AG04450 (cell line): ENCODE measurements at regions of chr2 and their contacts with region 1.

Region 1: DNA sequence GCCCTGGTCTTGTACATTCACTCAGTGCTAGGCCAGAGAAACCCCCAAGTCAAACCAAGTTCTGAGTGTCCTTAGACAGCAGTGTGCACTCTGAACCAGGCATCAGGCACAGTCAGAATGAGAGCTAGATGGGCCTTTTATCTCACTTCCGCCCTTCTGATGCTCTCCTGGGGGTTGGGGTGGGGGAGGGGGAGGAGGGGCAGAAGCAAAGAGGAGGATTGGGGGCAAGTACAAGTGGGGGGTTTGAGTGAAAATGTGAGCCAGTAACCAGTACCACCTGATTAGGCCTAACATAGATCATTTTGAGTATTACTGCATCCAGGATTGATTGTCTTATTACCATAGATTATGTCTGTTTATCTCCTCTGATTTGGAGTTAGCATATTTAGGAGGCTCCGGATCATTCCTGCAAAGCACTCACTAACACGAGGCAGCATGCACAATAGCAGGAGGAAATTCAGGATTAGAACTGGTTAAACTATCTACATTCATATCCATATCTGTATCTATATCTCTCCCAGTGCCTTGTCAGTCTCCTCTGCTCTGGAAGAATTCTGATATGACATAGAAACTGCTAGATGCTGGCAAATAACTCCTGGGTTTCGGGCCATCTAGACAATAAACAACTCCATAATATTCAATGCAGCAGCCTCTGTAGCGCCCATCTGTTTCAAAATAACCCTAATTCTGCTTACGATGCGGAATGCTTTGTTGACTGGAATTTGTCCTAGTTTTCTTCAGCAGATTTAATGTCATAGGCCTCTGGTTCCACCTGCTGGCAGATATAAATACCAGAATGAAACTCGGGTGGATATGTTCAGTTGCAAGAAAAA is 149.1 kb downstream of the RHBDD1 start:
- DNase-seq: peak; percentile 66
- H3K4me3 ChIP-seq: no peak overlapping the region
- H3K27ac ChIP-seq: no peak overlapping the region
- H3K27me3 ChIP-seq: no peaks in the 10 kb centered on the region
- CTCF ChIP-seq: peak; percentile 74

Region 2: DNA sequence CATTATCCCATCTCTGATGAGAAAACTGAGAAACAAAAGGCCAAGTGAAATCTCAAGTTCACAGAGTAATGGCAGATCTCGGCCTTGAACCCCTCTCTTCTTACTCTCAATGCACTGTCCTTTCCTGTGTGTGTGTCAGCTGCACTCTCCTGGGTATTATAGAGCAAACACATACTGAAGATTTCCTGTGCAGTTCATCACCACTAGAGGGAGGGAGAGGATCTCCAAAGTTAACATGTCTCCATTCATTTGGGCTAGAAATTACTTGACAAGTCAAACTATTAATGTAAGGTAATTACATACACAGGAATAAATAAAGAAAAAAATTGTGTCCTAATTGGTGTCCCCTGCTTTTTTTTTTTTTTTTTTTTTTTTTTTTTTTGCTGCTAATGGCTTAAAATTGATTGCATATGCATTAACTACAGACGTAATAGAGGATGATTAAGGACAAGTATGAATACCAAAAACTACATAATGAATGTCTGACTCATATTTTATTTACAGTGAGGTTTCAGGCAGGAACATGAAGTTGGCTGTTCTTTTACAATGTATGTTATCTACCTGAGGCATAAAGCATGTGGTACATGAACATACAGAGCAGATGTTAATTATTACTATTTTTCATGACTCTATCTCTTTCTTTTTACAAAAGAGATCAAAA is 1316.2 kb before region 1 on chr2:
- CTCF ChIA-PET with region 1: interaction called, 22 read pairs
- POLR2A ChIA-PET with region 1: no interaction called
- DNase-seq: peak; percentile 56
- H3K4me3 ChIP-seq: no peak overlapping the region
- H3K27ac ChIP-seq: no peak overlapping the region
- H3K27me3 ChIP-seq: no peaks in the 10 kb centered on the region
- CTCF ChIP-seq: peak; percentile 90

Region 3: GRCh38 chr2:226869371-226869770 is 115.6 kb before region 1 on chr2:
- CTCF ChIA-PET with region 1: no interaction called
- POLR2A ChIA-PET with region 1: no interaction called
- DNase-seq: no peak
- H3K4me3 ChIP-seq: no peak overlapping the region
- H3K27ac ChIP-seq: no peak overlapping the region
- H3K27me3 ChIP-seq: no peaks in the 10 kb centered on the region
- CTCF ChIP-seq: no peak

Region 4: DNA sequence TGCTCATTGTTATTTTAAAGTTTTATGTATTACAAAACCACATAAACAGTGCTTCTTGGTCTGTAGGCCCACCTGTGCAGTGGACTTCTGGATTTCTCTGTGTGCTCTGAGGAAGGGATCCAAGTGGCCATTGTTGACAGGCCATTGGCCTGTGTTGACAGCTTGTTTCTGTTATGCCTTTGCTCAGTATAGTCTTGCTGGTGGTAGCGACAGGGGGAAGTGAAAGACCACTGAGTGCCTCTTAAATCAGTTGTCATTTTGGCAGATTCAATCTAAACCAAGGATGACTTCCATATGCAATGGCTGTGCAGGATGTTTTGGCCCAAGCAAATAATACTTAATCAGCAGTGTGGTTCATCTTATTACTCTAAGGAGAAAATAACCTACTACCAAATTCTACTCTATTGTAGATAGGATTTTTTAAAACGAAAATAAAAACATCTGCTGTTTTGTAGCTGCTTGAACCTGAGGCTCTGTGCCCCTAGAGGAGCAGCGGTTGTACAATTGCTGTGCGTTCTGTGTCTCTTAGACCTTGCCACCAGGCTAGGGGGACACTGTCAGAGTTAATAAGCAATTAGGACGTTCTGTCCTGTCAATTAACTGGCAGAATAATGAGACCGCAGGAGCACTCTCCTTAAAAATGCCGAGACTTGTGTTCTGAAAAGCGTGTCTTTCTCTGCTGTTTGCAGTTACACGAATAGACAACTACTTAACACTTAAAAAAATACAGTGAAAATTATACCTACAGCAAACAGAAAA is 40.9 kb before region 1 on chr2:
- CTCF ChIA-PET with region 1: no interaction called
- POLR2A ChIA-PET with region 1: no interaction called
- DNase-seq: no peak
- H3K4me3 ChIP-seq: no peak overlapping the region
- H3K27ac ChIP-seq: no peak overlapping the region
- H3K27me3 ChIP-seq: no peaks in the 10 kb centered on the region
- CTCF ChIP-seq: no peak

Region 5: GRCh38 chr2:226965376-226965775 is 19.6 kb before region 1 on chr2:
- CTCF ChIA-PET with region 1: no interaction called
- POLR2A ChIA-PET with region 1: no interaction called
- DNase-seq: no peak
- H3K4me3 ChIP-seq: no peak overlapping the region
- H3K27ac ChIP-seq: no peak overlapping the region
- H3K27me3 ChIP-seq: no peaks in the 10 kb centered on the region
- CTCF ChIP-seq: no peak

Region 6: DNA sequence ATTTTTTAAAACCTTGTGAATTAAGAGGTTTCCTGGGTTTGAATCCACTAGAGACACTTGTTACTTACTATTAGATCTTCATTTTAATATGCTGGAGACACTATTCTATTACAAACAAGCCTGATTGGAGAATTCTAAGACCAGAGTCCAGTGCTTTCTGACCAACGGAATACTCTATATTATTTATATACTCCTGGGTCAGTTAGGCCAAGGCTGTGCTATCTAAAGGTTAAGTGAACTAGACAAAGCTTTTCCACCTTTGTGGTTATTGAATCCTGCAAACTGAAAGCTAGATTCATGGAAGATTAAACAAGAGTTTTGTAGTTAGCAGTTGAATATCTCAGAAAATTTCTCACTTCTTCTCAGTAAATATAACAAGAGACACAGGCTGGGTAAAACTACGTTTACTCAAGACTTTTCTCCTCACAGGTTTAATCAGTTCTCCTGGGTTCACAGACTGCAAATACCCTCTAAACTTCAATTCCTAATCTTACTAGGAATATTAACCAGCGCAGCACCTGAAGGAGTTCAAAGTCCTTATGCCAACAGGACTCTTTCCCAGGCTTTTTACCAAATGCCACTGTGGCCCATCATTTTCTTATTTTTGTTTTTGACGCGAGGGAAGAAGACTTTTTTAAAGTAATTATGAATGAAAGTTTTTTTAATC is 112.7 kb after region 1 on chr2:
- CTCF ChIA-PET with region 1: no interaction called
- POLR2A ChIA-PET with region 1: no interaction called
- DNase-seq: no peak
- H3K4me3 ChIP-seq: no peak overlapping the region
- H3K27ac ChIP-seq: no peak overlapping the region
- H3K27me3 ChIP-seq: no peaks in the 10 kb centered on the region
- CTCF ChIP-seq: no peak